ENCODE measurements at regions of chr5 and their contacts with region 1.

Region 1: GRCh38 chr5:181184857-181185251 is 20.1 kb downstream of the TRIM7 start:
- DNase-seq: no peak
- H3K4me3 ChIP-seq: no peak overlapping the region
- CTCF ChIP-seq: no peak

Region 2: DNA sequence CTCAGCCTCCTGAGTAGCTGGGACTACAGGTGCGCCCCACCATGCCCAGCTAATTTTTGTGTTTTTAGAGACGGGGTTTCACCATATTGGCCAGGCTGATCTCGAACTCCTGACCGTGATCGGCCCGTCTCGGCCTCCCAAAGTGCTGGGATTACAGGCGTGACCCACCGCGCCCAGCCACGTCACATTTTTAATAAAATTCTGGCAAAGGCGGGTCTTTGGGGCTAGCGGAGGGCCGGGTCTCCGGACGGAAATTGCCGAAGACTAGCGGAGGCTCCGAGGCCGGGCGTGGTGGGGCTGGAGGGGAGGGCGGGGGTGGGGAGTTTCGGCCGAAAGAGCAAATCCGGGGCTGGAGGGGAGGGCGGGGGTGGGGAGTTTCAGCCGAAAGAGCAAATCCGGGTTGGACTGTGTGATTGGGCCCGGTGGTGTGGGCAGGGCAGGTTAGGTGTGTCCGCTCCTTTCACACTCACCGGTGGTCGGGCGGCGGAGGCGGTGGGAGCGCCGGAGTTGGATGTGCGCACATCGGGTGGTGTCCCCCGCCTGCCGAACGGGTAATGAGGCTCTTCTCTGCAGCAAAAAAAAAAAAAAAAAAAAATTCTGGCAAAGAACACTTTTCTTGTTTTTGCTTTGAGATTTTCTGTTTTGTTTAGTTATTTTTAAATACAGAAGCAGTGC is 1607.4 kb before region 1 on chr5:
- CTCF ChIA-PET with region 1: no interaction called
- POLR2A ChIA-PET with region 1: no interaction called
- DNase-seq: no peak
- H3K4me3 ChIP-seq: no peak overlapping the region
- CTCF ChIP-seq: no peak

Region 3: DNA sequence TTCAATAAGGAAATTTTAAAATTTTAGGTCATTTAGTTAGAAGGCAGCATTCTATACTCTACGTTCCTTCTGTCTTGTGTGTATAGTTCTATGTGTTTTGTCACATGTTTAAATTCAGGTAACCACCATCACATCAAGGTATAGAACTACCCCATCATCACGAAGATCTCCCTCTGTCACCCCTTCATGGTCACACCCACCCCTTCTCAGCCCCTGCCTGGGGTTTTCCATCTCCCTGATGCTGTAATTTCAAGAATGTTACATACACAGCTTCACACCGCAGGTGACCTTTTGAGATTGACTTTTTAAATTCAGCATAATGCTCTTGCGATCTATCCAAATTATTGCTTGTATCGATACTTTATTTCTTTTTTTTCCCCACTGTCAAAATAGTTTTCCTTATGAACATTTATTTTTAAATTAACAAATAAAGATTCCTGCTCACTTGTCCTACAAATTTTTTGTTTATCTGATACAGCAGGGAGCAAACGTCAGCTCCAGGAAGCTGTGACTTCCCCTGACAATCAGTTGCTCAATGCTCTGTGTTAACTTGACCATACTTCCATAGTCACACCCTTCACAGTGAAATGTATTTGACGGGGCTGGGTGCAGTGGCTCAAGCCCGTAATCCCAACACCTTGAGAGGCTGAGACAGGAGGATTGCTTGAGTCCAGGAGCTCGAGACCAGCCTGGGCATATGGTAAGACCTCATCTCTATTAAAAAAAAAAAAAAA is 275.7 kb before region 1 on chr5:
- CTCF ChIA-PET with region 1: no interaction called
- POLR2A ChIA-PET with region 1: no interaction called
- DNase-seq: no peak
- H3K4me3 ChIP-seq: no peak overlapping the region
- CTCF ChIP-seq: no peak

Region 4: DNA sequence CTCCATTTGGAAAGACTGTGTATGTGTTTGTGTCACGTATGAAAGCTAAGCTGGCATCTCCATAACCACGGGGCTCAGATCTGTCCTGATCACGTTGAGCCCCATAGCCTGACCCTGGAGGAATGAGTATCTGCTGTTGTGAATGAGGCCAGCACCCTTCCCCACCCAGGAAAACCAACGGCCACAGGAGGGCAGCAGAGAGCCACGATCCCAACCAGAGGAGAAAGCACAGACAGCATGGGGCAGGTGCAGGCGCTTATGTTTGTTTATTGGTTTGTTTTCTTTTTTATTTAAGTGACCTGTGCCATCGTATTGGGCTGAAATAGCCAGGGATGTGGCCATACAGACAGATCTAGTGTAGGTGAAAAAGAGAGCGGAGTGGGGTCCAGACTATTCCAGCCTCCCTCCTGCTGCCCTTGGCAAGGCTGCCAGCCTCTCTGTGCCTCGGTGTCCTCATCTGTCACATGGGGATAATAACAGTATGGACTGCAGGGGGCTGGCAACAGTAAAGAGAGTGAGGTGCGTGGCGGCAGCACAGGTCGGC is 25.5 kb before region 1 on chr5:
- CTCF ChIA-PET with region 1: interaction called, 12 read pairs
- POLR2A ChIA-PET with region 1: no interaction called
- DNase-seq: no peak
- H3K4me3 ChIP-seq: no peak overlapping the region
- CTCF ChIP-seq: peak; percentile 93

Region 5: DNA sequence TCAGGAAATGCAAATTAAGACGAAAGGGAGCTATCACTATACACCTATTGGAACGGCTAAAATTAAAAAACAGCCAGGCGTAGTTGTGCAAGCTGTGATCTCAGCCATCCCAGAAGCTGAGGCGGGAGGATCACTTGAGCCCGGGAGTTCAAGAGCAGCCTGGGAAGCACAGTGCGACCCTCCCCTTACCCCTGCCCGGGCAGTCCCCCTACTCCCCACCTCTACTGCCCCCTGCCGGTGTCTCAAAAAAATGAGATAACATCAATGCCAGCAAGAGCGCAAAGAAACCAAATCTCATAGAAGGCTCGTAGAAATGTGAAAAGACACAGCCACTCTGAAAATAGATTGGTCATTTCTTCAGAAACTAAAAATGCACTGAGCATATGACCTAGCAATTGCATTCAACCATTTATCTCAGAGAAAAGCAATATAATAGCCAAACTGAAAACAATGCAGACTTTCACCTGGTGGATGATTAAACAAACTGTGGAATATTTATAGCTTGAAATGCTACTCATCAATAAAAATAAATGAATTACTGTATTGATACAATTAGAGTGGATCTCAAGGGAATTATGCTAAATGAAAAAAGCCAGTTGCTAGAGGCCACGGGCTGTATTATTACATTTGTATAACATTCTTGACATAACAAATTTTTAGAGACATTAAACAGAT is 16.9 kb before region 1 on chr5:
- CTCF ChIA-PET with region 1: interaction called, 19 read pairs
- POLR2A ChIA-PET with region 1: no interaction called
- DNase-seq: no peak
- H3K4me3 ChIP-seq: no peak overlapping the region
- CTCF ChIP-seq: peak; percentile 28

Region 6: DNA sequence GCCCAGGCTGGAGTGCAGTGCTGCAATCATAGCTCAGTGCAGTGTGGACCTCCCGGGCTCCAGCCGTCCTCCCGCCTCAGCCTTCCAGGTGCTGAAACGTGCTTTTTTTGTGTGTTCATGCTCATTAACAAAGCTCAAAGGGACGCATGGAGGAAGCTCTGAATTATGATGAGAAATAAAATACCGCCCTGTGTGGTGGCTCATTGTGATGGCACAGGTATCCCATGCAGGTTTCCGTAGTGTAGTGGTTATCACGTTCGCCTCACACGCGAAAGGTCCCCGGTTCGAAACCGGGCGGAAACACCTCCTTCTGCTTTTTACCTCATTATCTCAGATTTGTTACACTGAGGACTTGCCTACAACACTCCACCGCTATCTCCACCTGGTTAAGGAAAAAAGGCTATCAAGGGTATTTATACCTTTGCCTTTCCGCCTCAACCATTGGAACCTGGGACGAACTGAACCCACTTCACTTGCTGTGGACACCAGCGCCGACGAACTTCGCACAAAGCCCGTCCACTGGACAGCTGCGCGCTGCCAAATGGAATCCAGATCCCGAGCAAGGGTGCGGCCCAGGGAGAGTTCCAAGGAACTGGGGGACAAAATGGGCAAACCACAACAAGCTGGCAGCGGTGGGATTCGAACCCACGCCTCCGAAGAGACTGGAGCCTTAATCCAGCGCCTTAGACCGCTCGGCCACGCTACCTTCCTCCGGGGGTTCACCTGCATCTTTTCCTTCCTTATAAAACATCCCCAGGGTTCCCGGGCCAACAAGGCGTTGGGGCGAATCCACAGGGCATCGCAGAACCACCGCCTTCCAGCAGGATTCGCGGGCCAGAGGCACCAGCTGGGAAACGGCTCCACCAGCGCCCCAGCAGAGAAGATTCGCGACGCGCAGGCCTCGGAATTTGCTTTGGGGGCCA is 11.2 kb before region 1 on chr5:
- CTCF ChIA-PET with region 1: interaction called, 19 read pairs
- POLR2A ChIA-PET with region 1: no interaction called
- DNase-seq: no peak
- H3K4me3 ChIP-seq: peak overlapping the region; percentile 23
- CTCF ChIP-seq: no peak